ENCODE measurements at regions of chr22 and their contacts with region 1.

Region 1: DNA sequence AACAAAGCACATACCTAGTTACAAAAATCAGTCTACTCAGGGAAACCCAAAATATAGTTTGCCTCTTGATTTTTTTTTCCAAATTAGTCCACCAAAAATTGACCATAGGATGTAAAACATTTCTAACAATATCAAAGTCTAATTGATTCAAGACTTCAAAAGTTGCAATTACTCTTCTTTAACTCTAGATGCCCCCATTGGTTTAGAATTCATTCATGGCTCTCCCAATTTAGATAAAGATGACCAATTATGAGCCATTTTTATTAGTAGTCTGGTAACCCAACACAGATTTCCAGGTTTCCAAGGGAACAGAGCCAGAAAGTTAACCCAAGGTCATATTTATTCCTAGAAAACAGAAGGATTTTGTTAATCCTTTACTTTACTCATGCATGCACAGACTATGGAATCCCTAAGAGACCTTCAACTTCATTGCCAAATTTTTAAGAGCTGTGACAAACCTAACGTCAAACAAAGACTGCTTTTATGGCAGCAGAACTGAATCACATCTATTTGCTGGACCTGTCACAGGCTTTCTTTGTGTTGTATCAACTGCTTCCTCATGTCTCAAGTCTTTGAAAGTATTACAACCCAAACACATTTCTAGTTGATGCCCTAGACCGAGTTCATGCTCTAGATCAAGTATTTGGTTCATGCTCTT is 55.3 kb downstream of the C22orf42 start:
- DNase-seq: no peak
- H3K4me3 ChIP-seq: no peak overlapping the region
- H3K27ac ChIP-seq: no peak overlapping the region
- H3K4me1 ChIP-seq: no peaks in the 10 kb centered on the region
- H3K27me3 ChIP-seq: no peaks in the 10 kb centered on the region
- CTCF ChIP-seq: peak; percentile 32 to 52

Region 2: DNA sequence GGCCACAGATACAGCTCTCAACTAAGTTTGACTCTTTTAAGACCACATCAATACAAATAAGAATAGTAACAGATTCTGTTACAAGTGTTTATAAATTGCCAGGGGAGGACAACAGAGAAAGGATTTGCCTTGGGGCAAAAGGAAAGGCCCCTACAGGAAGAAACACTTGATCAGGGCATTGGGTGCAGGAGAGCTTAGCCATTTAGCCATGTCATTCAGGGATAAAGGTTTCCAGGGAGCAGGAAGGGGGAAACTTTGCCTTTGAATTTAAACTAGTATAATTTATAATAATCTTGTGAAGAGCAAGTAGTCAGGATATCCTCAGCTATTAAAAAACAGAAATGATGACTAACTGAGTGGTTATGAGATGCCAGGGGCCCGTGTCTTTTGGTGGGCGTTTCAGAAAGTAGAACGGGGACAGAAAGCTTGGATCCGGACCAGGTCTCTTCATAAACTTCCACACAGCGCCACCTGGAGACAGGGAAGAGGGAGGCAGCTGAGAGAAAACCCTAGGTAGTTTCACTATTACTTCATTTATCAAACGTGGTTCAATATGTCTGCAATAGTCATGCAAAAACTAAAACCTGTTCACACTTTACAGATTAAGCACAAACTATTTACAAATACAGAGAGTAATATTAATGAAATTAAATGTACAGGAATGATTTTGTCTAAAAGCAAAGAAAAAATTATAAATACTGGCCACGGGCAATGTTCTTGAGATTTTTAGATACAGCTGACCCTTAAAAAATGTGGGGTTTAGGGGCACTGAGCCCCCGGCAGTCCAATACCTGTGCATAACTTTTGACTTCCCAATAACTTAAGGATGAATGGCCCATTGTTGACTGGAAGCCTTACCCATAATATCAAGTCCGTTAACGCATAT is 162.3 kb after region 1 on chr22:
- CTCF ChIA-PET with region 1: no interaction called
- dilution Hi-C with region 1: no loop called
- in situ Hi-C with region 1: no loop called
- intact Hi-C with region 1: loop called (anchors 2 kb)
- DNase-seq: peak; percentile 44
- H3K4me3 ChIP-seq: no peak overlapping the region
- H3K27ac ChIP-seq: no peak overlapping the region
- H3K4me1 ChIP-seq: no peaks in the 10 kb centered on the region
- H3K27me3 ChIP-seq: no peaks in the 10 kb centered on the region
- CTCF ChIP-seq: peak; percentile 90 to 92

Region 3: GRCh38 chr22:32354360-32355351 is 250.9 kb after region 1 on chr22:
- CTCF ChIA-PET with region 1: no interaction called
- dilution Hi-C with region 1: no loop called
- in situ Hi-C with region 1: loop called in 1 of 2 experiments (anchors 25 kb)
- intact Hi-C with region 1: loop called (anchors 1 kb)
- DNase-seq: peak; percentile 21
- H3K4me3 ChIP-seq: no peak overlapping the region
- H3K27ac ChIP-seq: no peak overlapping the region
- H3K4me1 ChIP-seq: no peaks in the 10 kb centered on the region
- H3K27me3 ChIP-seq: no peaks in the 10 kb centered on the region
- CTCF ChIP-seq: no peak

Region 4: DNA sequence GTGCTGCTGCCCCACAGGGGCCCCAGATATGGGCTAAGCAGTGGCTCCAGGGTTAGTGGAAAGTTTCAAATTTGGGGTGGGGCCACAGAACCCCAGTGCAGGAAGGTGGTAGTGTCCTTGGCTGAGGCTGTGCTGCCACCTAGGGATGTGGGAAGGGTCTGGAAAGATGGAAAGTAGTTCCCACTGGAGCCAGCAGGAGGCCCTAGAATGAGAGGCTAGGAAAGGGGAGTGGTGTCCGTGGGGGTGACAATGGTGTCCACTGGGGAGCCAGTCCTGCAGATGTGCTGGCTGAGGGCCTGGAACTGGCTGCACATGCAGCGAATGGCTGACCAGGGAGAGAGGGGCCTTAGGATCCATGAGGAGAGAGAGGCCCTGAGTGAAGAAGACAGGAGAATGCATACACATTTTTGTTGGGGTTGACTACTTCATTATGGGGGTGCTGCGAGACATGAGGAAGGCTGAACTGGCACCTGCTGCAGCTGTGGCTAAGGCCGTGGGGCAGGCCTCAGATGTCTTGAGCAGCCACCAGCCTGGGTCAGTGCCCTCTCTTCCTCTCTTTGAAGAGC is 275.0 kb after region 1 on chr22:
- CTCF ChIA-PET with region 1: no interaction called
- dilution Hi-C with region 1: no loop called
- in situ Hi-C with region 1: loop called in 1 of 2 experiments (anchors 25 kb)
- intact Hi-C with region 1: loop called (anchors 5 kb)
- DNase-seq: peak; percentile 31
- H3K4me3 ChIP-seq: no peak overlapping the region
- H3K27ac ChIP-seq: no peak overlapping the region
- H3K4me1 ChIP-seq: no peaks in the 10 kb centered on the region
- H3K27me3 ChIP-seq: no peaks in the 10 kb centered on the region
- CTCF ChIP-seq: peak; percentile 75 to 86

Region 5: GRCh38 chr22:32444068-32444467 is 340.3 kb after region 1 on chr22:
- CTCF ChIA-PET with region 1: no interaction called
- dilution Hi-C with region 1: no loop called
- in situ Hi-C with region 1: loop called in 1 of 2 experiments (anchors 10 kb)
- intact Hi-C with region 1: loop called (anchors 10 kb)
- DNase-seq: peak; percentile 25
- H3K4me3 ChIP-seq: no peak overlapping the region
- H3K27ac ChIP-seq: no peak overlapping the region
- H3K4me1 ChIP-seq: no peaks in the 10 kb centered on the region
- H3K27me3 ChIP-seq: no peaks in the 10 kb centered on the region
- CTCF ChIP-seq: peak; percentile 36 to 70